ENCODE measurements at regions of chr21 and their contacts with region 1.

Region 1: GRCh38 chr21:43866260-43866629 is 1.2 kb downstream of the AGPAT3 start:
- DNase-seq: no peak
- ATAC-seq: peak; percentile 29
- H3K4me3 Mint-ChIP-seq: peak overlapping the region; percentile 82
- H3K27ac Mint-ChIP-seq: peak overlapping the region; percentile 83
- H3K4me1 Mint-ChIP-seq: peaks cover 46% of the 10 kb centered on the region
- H3K27me3 Mint-ChIP-seq: no peaks in the 10 kb centered on the region
- CTCF ChIP-seq: no peak

Region 2: GRCh38 chr21:43728467-43729390 is 137.5 kb before region 1 on chr21:
- CTCF ChIA-PET with region 1: no interaction called
- POLR2A ChIA-PET with region 1: no interaction called
- intact Hi-C with region 1: loop called (anchors 5 kb)
- DNase-seq: peak; percentile 69
- ATAC-seq: peak; percentile 75
- H3K4me3 Mint-ChIP-seq: peak overlapping the region; percentile 88
- H3K27ac Mint-ChIP-seq: peak overlapping the region; percentile 82
- H3K4me1 Mint-ChIP-seq: peaks cover 54% of the 10 kb centered on the region
- H3K27me3 Mint-ChIP-seq: no peaks in the 10 kb centered on the region
- CTCF ChIP-seq: no peak

Region 3: DNA sequence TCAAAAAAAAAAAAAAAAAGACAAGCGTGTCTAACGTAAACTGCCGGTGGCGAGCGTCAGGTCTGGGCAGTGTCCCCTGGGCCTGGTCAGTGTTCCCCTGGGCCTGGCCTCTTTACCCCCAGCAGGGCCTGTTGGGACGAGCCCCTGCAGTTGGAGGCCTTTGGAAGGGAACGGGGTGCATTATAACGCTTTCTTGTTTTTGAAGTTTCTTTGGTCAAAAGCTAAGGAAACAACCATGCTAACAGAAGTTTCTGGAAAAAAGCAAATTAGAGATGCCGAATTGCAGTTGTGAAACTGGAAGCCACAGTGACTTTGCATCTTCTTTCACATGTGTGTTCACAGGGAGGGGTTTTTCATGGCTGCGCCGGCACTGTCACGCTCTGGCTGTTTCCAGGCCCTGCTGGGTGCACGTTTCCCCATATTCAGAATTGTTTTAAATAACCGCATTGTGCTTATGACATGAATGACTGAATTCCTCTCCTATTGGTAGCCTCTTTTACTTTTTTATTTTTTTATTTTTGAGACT is 60.9 kb before region 1 on chr21:
- CTCF ChIA-PET with region 1: no interaction called
- POLR2A ChIA-PET with region 1: interaction called, 3 read pairs
- intact Hi-C with region 1: loop called (anchors 1 kb)
- DNase-seq: peak; percentile 69
- ATAC-seq: peak; percentile 97
- H3K4me3 Mint-ChIP-seq: peak overlapping the region; percentile 78
- H3K27ac Mint-ChIP-seq: peak overlapping the region; percentile 95
- H3K4me1 Mint-ChIP-seq: peaks cover 37% of the 10 kb centered on the region
- H3K27me3 Mint-ChIP-seq: peaks cover 2% of the 10 kb centered on the region
- CTCF ChIP-seq: no peak

Region 4: GRCh38 chr21:43916691-43917514 is 50.7 kb after region 1 on chr21:
- CTCF ChIA-PET with region 1: interaction called, 4 read pairs
- POLR2A ChIA-PET with region 1: interaction called, 3 read pairs
- intact Hi-C with region 1: loop called (anchors 2 kb)
- DNase-seq: peak; percentile 37
- ATAC-seq: peak; percentile 64
- H3K4me3 Mint-ChIP-seq: peak overlapping the region; percentile 81
- H3K27ac Mint-ChIP-seq: peak overlapping the region; percentile 68
- H3K4me1 Mint-ChIP-seq: peaks cover 63% of the 10 kb centered on the region
- H3K27me3 Mint-ChIP-seq: no peaks in the 10 kb centered on the region
- CTCF ChIP-seq: no peak

Region 5: DNA sequence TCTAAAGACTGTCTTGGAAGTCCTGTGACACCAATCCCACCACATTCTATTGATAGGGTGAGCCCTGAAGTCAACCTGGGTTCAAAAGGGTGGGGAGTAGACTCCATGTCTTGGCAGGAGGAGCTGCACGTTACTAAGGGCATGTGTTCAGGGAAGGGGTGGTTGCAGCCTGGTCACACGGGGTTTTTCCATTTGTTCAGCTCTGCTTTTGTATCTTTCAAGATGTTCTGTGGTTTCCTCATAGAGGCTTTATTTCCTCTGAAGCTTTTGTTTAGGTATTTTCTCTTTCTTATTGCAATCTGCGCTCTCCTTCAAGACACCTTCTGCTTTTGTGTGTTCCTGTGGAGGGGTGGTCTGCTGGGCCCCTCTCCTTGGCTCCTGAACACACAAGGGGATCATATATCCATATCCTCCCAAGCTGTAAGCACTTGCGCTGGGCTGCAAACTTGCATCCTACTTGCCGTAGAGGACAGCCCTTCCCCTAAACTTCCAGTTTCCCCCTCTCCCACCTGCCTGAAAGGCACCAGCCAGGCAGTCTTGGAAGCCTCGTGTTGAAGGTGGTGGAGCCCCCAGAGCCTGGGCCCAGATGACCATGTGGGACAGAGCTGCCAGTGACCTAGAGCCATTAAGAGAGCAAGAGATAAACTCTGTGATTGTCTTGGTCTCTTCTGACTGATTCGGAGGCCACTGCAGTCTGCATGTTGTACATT is 83.4 kb after region 1 on chr21:
- CTCF ChIA-PET with region 1: no interaction called
- POLR2A ChIA-PET with region 1: no interaction called
- intact Hi-C with region 1: no loop called
- DNase-seq: no peak
- ATAC-seq: no peak
- H3K4me3 Mint-ChIP-seq: peak overlapping the region; percentile 6
- H3K27ac Mint-ChIP-seq: no peak overlapping the region
- H3K4me1 Mint-ChIP-seq: peaks cover 13% of the 10 kb centered on the region
- H3K27me3 Mint-ChIP-seq: no peaks in the 10 kb centered on the region
- CTCF ChIP-seq: no peak

Region 6: GRCh38 chr21:44089001-44089911 is 223.0 kb after region 1 on chr21:
- CTCF ChIA-PET with region 1: no interaction called
- POLR2A ChIA-PET with region 1: no interaction called
- intact Hi-C with region 1: no loop called
- DNase-seq: no peak
- ATAC-seq: peak; percentile 70
- H3K4me3 Mint-ChIP-seq: peak overlapping the region; percentile 78
- H3K27ac Mint-ChIP-seq: peak overlapping the region; percentile 97
- H3K4me1 Mint-ChIP-seq: peaks cover 64% of the 10 kb centered on the region
- H3K27me3 Mint-ChIP-seq: no peaks in the 10 kb centered on the region
- CTCF ChIP-seq: no peak